Activated naive CD4-positive, alpha-beta T cell treated with anti-CD3 and anti-CD28 coated beads, Interleukin-2, amount 10 ng/mL, durations not matched to agents 7 days and 5 days (primary cell): ENCODE measurements at regions of chr7 and their contacts with region 1.

Region 1: DNA sequence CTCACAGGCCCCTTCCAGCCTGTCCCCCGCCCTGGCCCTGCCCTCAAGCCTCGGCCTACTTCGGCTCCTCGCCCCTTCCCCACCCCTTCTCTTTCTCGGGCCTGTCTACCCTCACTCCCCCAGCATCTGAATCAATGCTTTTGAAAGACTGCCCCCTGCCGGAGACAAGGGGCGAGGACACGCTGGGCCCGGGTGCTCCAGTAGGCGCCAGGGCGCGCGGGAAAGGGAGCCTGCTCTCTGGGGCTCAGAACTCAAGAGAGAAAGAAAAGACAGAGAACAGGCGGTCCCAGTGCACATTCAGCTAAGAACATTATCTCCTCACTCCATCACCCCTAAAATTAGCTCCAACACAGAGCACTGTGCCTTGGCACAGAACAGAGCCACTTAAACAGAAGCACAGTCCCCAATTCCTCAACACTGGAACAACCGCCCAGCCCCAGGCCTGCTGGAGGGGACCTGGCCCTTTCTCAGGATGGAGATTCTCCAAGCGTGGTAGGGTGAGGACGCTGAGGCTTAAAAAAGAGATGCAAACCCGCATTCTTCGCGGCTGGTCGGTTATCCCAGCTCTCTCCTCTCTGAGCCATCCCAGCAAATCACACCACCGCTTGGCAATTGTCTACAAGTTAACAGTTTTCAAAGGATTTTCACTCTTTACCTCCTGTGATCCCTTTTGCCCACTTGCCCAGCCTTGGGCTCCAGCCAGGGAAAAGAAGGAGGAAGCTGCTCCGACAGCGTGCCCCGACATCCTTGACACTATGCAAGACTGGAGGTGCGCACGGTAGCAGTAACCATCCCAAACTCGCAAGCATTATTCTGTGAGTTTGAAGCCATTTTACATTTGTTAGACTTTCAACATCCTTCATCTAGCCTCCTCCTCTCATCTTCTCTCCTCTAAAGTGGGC is 2.1 kb downstream of the GIGYF1 start:
- DNase-seq: peak; percentile 90
- H3K4me3 Mint-ChIP-seq: peak overlapping the region; percentile 92
- H3K27ac Mint-ChIP-seq: peak overlapping the region; percentile 49
- H3K4me1 Mint-ChIP-seq: peaks cover 32% of the 10 kb centered on the region
- H3K27me3 Mint-ChIP-seq: peaks cover 22% of the 10 kb centered on the region

Region 2: DNA sequence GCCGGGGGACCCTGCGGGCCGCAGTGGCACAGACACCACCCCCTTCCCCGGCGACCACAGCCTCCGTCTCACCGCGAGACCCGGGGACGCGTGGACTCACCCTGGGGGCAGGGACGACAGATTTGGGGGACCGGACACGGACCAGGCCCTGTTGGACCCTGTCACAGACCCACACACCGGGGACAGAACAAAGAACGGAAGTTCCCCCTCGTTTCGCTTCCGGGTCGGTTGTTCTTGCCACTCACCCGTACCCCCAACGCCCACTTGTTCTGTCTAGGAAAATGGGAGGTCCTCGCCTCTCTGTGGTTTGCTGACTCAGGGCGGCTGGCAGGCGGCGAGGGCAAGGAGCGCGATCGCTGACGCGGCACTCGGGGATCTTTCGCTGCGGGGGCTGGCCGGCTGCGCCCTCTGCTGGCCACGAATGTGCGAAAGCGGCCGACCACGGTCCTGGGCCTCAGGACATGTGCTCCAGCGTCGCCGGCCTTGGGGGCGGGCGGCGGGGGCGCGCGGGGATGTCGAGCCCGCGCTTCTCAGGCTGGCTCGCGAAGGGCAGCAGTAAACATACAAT is 610.3 kb before region 1 on chr7 and contains the start of gene ZNF3:
- CTCF ChIA-PET with region 1: no interaction called
- DNase-seq: peak; percentile 98
- H3K4me3 Mint-ChIP-seq: peak within 1 kb of the TSS; percentile 83
- H3K27ac Mint-ChIP-seq: peak within 1 kb of the TSS; percentile 90
- H3K4me1 Mint-ChIP-seq: peaks cover 32% of the 10 kb centered on the region
- H3K27me3 Mint-ChIP-seq: peaks cover 29% of the 10 kb centered on the region

Region 3: GRCh38 chr7:100586266-100587025 is 105.5 kb before region 1 on chr7 and contains the start of gene FBXO24:
- CTCF ChIA-PET with region 1: interaction called, 16 read pairs
- DNase-seq: peak; percentile 100
- H3K4me3 Mint-ChIP-seq: peak within 1 kb of the TSS; percentile 89
- H3K27ac Mint-ChIP-seq: peak within 1 kb of the TSS; percentile 98
- H3K4me1 Mint-ChIP-seq: peaks cover 36% of the 10 kb centered on the region
- H3K27me3 Mint-ChIP-seq: peaks cover 30% of the 10 kb centered on the region

Region 4: DNA sequence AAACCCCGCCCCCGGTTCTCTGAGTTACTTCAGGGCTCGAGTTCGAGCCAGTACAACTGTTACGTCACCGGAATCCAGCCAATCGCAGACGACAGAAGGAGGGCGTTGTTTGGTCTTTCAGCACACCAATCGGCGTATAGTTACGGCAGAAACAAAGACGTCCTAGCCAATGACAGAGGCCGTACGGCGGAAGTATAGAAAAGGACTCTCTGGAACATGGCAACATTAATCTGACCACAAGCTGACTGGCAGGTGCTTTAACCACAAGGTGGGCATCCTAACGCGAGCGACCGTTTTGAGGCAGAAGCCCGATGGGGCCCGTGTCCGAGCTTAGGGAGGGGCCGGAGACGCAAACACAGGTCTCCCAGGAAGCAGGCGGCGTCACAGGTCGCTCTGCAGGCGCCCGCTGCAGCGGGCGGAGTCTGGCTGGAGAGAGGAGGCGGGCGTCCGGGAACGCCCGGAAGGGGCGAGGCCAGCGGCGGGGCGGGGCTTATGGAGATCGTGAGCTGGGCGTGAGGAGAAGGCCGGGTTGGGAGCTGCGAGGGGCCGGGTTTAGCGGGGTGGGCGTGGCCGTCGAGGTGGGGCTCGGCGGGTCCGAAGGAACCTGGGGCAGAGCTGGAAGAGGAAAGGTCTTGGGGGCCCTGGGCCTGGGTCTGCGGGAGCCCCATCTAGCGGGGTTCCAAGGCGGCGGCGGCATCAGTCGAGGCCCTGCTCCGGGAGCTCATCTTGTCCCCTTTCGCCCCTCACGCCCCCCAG is 79.8 kb before region 1 on chr7 and contains the start of gene MOSPD3:
- CTCF ChIA-PET with region 1: interaction called, 22 read pairs
- DNase-seq: peak; percentile 99
- H3K4me3 Mint-ChIP-seq: peak within 1 kb of the TSS; percentile 91
- H3K27ac Mint-ChIP-seq: peak within 1 kb of the TSS; percentile 99
- H3K4me1 Mint-ChIP-seq: peaks cover 38% of the 10 kb centered on the region
- H3K27me3 Mint-ChIP-seq: peaks cover 22% of the 10 kb centered on the region

Region 5: DNA sequence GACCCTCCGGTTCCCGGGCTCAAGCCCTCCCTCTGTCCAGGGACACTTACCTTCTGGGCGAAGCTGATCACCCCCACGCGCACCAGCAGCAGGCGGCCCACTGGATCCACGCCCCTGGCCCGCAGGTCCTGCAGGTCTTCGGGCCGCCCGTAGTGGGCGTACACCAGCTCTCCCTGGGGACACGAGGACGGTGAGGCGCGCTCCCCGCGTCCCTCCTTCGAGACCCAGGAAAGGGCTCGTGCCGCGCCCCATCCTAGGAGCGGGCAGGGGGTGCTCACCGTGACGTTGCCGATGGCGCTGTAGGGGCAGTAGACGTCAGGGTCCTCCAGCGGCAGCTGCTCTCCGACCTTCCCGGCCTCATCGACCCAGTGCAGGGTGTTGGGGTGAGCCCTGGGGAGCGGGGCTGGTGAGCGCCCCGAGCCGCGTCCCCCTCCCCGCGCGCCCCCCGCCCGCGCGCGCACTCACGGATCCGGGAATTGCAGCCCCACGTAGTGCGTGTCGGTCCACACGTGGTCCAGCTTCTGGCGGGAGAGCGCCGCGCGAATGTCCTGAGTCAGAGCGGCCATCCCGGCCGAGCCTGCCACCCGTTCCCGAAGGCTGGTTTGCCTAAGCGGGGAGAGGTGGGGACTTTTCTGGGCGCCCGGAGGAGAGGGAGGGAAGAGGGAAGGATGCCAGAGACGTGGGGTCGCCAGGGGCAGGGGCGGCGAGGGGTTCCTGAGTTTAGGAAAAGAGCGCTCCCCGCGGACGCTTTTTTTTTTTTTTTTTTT is 58.8 kb before region 1 on chr7:
- CTCF ChIA-PET with region 1: interaction called, 17 read pairs
- DNase-seq: peak; percentile 78
- H3K4me3 Mint-ChIP-seq: peak overlapping the region; percentile 79
- H3K27ac Mint-ChIP-seq: peak overlapping the region; percentile 70
- H3K4me1 Mint-ChIP-seq: peaks cover 52% of the 10 kb centered on the region
- H3K27me3 Mint-ChIP-seq: peaks cover 55% of the 10 kb centered on the region

Region 6: GRCh38 chr7:100675581-100676350 is 16.2 kb before region 1 on chr7:
- CTCF ChIA-PET with region 1: interaction called, 29 read pairs
- DNase-seq: peak; percentile 92
- H3K4me3 Mint-ChIP-seq: peak overlapping the region; percentile 89
- H3K27ac Mint-ChIP-seq: peak overlapping the region; percentile 89
- H3K4me1 Mint-ChIP-seq: peaks cover 44% of the 10 kb centered on the region
- H3K27me3 Mint-ChIP-seq: peaks cover 18% of the 10 kb centered on the region

Region 7: GRCh38 chr7:100705753-100706671 is 14.1 kb after region 1 on chr7 and contains the start of gene POP7:
- CTCF ChIA-PET with region 1: interaction called, 38 read pairs
- DNase-seq: peak; percentile 99
- H3K4me3 Mint-ChIP-seq: peak within 1 kb of the TSS; percentile 98
- H3K27ac Mint-ChIP-seq: peak within 1 kb of the TSS; percentile 96
- H3K4me1 Mint-ChIP-seq: peaks cover 14% of the 10 kb centered on the region
- H3K27me3 Mint-ChIP-seq: peaks cover 15% of the 10 kb centered on the region